ENCODE measurements at regions of chr11 and their contacts with region 1.

Region 1: DNA sequence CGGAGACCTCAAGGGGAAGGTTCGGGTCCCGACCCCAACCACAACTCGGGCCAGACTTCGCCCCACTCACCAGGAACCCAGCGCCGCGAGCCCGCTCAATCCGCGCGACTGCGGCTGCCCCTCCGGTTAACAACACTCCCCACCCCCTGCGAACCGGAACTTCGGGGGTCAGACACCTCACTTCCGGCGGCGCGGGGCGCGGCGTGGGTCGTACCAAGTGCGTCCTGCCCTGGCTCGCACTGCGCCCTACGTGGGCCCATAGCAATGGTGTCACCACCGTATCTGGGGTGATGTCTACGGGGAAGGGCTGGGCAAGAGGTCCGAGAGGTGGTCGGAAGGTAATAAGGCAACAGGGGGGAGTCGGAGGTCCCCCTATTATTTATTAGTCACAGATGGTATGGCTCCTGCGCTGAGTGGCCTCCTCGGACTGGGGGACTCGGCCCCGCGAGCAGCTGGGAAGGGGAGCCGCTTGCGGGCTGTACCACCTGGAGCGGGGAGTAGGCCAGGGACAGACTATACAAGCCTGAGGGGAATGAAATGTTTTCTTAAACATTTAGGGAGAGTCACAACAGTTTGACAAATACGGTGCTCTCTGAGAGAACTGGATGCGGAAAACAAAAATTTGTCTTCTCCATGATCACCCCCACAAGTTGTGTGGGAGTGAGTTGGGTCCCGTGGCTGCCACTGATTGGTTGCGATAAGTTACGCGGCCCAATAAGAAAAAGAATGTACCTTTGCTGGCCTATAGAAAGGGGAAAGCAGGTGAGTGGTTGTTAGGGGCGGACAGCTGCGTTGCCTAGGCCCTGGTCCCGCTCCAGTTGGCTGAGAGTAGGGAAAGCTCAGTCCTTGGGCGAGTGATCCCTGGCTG is at the start of gene SYVN1:
- DNase-seq: peak; percentile 93
- ATAC-seq: peak; percentile 89
- H3K4me3 Mint-ChIP-seq: peak within 1 kb of the TSS; percentile 100
- H3K27ac Mint-ChIP-seq: peak within 1 kb of the TSS; percentile 100
- H3K4me1 Mint-ChIP-seq: peaks cover 33% of the 10 kb centered on the region
- H3K27me3 Mint-ChIP-seq: no peaks in the 10 kb centered on the region
- CTCF ChIP-seq: no peak
- total RNA-seq, gene SYVN1: 20.6 to 26.8 TPM

Region 2: GRCh38 chr11:65111744-65112414 is 22.7 kb before region 1 on chr11 and contains the start of gene TM7SF2:
- CTCF ChIA-PET with region 1: interaction called, 30 read pairs
- POLR2A ChIA-PET with region 1: interaction called, 32 read pairs
- intact Hi-C with region 1: no loop called
- DNase-seq: peak; percentile 98
- ATAC-seq: peak; percentile 77
- H3K4me3 Mint-ChIP-seq: peak within 1 kb of the TSS; percentile 86
- H3K27ac Mint-ChIP-seq: peak within 1 kb of the TSS; percentile 84
- H3K4me1 Mint-ChIP-seq: peaks cover 43% of the 10 kb centered on the region
- H3K27me3 Mint-ChIP-seq: no peaks in the 10 kb centered on the region
- CTCF ChIP-seq: no peak
- total RNA-seq, gene TM7SF2: 12.4 to 17.5 TPM

Region 3: GRCh38 chr11:65117216-65118096 is 17.2 kb before region 1 on chr11 and contains the start of gene ZNHIT2:
- CTCF ChIA-PET with region 1: interaction called, 30 read pairs
- POLR2A ChIA-PET with region 1: interaction called, 77 read pairs
- intact Hi-C with region 1: no loop called
- DNase-seq: peak; percentile 100
- ATAC-seq: peak; percentile 75
- H3K4me3 Mint-ChIP-seq: peak within 1 kb of the TSS; percentile 87
- H3K27ac Mint-ChIP-seq: peak within 1 kb of the TSS; percentile 95
- H3K4me1 Mint-ChIP-seq: peaks cover 53% of the 10 kb centered on the region
- H3K27me3 Mint-ChIP-seq: no peaks in the 10 kb centered on the region
- CTCF ChIP-seq: peak; percentile 79
- total RNA-seq, gene ZNHIT2: 11.5 to 12.7 TPM

Region 4: DNA sequence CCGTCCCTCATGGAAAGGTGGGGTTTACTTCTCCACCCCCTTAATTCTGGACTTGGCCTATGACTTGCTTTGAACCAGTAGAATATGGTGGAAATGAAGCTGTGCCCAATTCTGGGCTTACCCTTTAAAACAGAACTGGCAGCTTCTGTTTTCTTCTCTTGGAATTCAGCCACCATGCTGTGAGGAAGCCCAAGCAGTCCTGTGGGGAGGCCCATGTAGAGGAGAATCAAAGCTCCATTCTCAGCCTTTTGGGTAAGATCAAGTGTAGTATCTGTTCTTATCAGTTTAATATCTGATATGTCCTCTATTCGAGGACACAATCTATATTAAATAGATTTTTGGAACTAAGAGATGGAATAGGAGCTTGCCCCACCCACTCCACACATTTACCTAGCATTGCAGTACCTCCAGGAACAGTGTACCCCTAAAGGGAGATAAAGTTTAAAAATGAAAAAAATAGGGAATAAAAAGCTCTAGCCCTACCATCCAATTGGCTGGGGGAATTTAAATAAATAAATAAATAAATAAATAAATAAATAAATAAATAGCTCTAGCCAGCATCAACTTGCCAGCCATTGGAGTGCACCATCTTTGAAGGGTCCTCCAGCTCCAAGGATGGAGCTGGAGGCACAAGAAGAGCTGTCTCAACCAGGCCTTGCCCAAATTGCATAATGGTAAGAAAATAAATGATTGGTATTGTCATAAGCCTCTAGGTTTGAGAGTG is 12.9 kb after region 1 on chr11:
- CTCF ChIA-PET with region 1: interaction called, 4 read pairs
- POLR2A ChIA-PET with region 1: interaction called, 10 read pairs
- intact Hi-C with region 1: no loop called
- DNase-seq: no peak
- ATAC-seq: no peak
- H3K4me3 Mint-ChIP-seq: no peak overlapping the region
- H3K27ac Mint-ChIP-seq: no peak overlapping the region
- H3K4me1 Mint-ChIP-seq: no peaks in the 10 kb centered on the region
- H3K27me3 Mint-ChIP-seq: no peaks in the 10 kb centered on the region
- CTCF ChIP-seq: no peak

Region 5: GRCh38 chr11:65165410-65166317 is 31.0 kb after region 1 on chr11:
- CTCF ChIA-PET with region 1: no interaction called
- POLR2A ChIA-PET with region 1: no interaction called
- intact Hi-C with region 1: no loop called
- DNase-seq: no peak
- ATAC-seq: no peak
- H3K4me3 Mint-ChIP-seq: no peak overlapping the region
- H3K27ac Mint-ChIP-seq: no peak overlapping the region
- H3K4me1 Mint-ChIP-seq: no peaks in the 10 kb centered on the region
- H3K27me3 Mint-ChIP-seq: no peaks in the 10 kb centered on the region
- CTCF ChIP-seq: no peak

Region 6: DNA sequence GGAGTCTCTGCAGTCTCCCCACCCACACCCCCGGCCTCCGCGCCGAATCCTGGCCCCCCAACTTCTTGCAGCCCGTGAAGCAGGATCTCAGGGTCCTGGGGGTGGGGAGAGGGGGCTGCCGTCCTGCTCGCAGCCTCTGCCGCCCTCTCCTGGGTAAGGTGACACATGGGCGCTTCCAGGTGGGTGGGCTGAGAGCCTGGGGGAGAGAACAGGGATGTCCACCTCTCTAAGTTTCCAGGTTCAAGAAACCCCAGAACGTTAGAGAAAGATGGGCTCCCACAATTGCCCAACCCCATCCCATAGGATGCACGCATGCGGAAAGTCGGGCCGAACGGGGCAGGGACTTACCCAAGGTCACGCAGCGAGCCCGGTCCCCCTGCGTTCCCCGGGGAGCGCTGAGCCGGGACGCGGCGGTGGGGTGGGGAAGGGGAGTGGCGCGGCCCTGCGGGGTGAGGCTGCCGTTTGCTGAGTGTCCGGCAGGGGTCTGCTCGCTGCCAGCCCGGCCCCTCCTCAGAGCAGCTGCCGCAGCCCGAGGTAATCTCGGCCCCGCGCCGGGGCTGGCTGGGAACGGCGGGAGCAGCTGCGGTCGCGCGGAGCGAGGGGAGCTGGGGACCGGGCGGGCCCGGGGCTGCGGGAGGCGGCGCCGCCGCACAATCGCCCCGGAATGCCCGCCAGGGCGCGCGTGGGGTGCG is 46.4 kb after region 1 on chr11:
- CTCF ChIA-PET with region 1: interaction called, 13 read pairs
- POLR2A ChIA-PET with region 1: interaction called, 21 read pairs
- intact Hi-C with region 1: no loop called
- DNase-seq: peak; percentile 63
- ATAC-seq: peak; percentile 76
- H3K4me3 Mint-ChIP-seq: peak overlapping the region; percentile 80
- H3K27ac Mint-ChIP-seq: peak overlapping the region; percentile 81
- H3K4me1 Mint-ChIP-seq: peaks cover 17% of the 10 kb centered on the region
- H3K27me3 Mint-ChIP-seq: no peaks in the 10 kb centered on the region
- CTCF ChIP-seq: peak; percentile 63

Region 7: GRCh38 chr11:65261591-65262380 is 127.2 kb after region 1 on chr11 and contains the start of gene POLA2:
- CTCF ChIA-PET with region 1: no interaction called
- POLR2A ChIA-PET with region 1: interaction called, 12 read pairs
- intact Hi-C with region 1: no loop called
- DNase-seq: peak; percentile 95
- ATAC-seq: peak; percentile 86
- H3K4me3 Mint-ChIP-seq: peak within 1 kb of the TSS; percentile 91
- H3K27ac Mint-ChIP-seq: peak within 1 kb of the TSS; percentile 95
- H3K4me1 Mint-ChIP-seq: peaks cover 35% of the 10 kb centered on the region
- H3K27me3 Mint-ChIP-seq: no peaks in the 10 kb centered on the region
- CTCF ChIP-seq: no peak
- total RNA-seq, gene POLA2: 55.2 to 63.8 TPM

Measured in activated CD8-positive, alpha-beta T cell treated with anti-CD3 and anti-CD28 coated beads for 36 hours (primary cell).